Colonic mucosa (tissue), 4 donors: ENCODE measurements at regions of chr17 and their contacts with region 1.

Region 1: DNA sequence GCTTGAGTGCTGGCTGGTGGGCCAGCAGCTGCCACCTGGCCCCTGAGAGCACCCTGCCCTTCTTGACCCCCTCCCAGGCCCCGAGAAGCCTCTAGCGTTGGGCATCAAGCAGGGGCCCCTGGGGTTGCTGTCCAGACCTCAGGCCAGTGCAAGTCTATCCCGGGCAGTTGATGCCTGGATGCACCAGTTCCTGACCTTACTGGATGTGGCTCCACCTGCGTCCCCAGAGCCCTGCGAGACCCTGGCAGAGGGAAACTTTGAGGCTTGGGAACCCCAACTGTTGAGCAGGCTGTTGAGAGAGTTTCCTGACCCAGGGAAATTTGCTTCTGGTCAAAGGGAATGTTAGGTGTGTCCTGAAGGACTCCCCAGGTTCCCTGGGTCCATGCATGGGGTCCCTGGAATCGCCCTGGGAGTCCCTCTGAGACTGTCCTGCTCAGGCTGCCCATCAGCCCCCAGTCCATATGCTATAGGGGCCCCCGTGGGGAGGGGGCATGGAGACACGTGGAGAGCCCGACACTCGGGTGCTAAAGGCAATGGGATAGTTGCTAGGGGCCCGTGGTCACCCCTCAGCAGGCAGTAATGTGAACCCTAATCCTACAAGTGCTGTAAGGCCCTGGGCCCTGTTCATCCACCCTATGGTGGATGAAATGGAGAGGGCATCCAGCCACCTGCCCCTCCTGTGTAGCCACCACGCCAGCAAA is 46.4 kb downstream of the RAB11FIP4 start:
- DNase-seq: no peak
- H3K4me3 ChIP-seq: no peak overlapping the region
- H3K27ac ChIP-seq: no peak overlapping the region
- H3K4me1 ChIP-seq: no peaks in the 10 kb centered on the region
- H3K27me3 ChIP-seq: no peaks in the 10 kb centered on the region
- CTCF ChIP-seq: no peak

Region 2: DNA sequence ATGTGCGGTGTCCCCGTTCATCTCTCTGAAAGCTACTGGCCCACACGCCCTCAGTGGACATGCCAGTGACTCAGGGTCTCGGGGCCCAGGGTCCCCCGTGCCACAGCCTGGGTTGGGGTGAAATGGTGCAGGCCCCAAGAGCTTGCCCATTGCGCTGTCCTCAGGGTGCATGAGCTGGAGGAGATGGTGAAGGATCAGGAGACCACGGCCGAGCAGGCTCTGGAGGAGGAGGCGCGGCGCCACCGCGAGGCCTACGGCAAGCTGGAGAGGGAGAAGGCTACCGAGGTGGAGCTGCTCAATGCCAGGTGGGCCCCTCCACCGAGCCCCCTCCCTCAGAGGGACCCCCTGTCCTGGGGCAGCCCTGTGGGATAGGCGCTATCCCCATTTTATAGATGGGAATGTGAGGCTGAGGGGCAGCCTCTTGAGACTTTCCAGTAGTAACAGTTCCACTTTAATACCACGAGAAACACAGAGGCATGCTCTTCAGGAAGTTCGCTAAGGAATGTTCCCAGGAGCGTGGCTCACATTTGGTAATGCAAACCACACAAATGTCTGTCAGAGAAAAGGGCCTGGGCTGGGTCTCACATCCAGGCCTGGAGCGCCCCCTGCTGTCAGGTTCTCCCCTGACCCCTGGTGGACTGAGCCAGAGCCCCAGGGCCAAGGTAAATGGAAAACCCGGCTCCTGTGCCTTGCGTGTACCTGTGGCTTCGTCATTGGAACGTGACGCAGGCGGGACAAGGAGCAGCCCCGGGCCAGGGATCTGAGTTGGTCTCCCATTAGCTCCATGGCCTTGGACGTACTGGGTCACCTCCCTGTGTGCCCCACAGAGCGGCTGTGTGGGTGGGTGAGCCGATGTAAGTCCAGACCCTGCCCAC is 87.3 kb after region 1 on chr17:
- intact Hi-C with region 1: loop called (anchors 2 kb)
- DNase-seq: peak; percentile 87
- H3K4me3 ChIP-seq: no peak overlapping the region
- H3K27ac ChIP-seq: no peak overlapping the region
- H3K4me1 ChIP-seq: no peaks in the 10 kb centered on the region
- H3K27me3 ChIP-seq: no peaks in the 10 kb centered on the region
- CTCF ChIP-seq: peak; percentile 90

Region 3: GRCh38 chr17:31678431-31678830 is 240.6 kb after region 1 on chr17:
- intact Hi-C with region 1: no loop called
- DNase-seq: no peak
- H3K4me3 ChIP-seq: no peak overlapping the region
- H3K27ac ChIP-seq: no peak overlapping the region
- H3K4me1 ChIP-seq: no peaks in the 10 kb centered on the region
- H3K27me3 ChIP-seq: no peaks in the 10 kb centered on the region
- CTCF ChIP-seq: no peak

Region 4: DNA sequence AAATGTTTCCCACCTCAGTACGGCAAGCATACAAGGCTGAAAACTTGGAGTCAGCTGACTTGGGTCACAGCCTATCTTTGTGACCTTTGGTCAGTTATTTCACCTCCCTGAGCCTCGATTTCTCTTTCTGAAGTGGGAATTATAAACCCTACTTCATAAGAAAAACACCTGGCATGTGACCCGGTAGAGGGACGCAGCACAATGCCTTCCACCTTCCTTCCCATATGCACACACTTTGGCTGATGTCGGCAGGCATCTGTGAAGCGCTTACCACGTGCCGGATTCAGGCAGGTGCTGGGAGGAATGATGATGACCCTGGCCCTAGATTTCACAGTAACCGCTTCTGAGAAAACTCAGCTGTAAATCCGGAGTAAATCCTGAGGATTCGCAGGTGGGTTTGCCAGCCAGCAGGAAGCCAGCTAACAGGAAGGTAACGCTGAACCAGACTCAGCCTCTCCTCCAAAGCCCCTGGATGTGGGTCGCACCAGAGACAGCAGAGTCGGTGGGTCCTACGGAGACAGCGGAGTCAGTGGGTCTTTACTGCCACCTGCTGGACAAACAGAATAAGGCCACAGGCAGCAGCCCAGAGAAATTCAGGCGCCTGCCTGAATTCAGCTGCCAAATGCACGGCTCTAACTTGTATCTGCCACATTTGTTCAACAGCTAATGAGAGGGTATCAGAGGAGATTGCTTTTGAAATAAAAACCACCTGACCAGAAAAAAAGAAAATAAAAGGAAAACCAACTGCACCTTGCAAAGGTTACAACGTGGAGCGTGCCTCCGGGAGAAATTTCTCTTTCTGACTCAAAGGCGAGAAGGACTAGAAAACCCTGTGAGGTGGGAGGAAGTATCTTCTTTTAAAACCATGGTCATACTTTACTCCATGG is 404.6 kb after region 1 on chr17:
- intact Hi-C with region 1: loop called (anchors 5 kb)
- DNase-seq: peak; percentile 78
- H3K4me3 ChIP-seq: peak overlapping the region; percentile 16
- H3K27ac ChIP-seq: peak overlapping the region; percentile 15
- H3K4me1 ChIP-seq: no peaks in the 10 kb centered on the region
- H3K27me3 ChIP-seq: no peaks in the 10 kb centered on the region
- CTCF ChIP-seq: peak; percentile 98

Region 5: GRCh38 chr17:31907342-31907962 is 469.6 kb after region 1 on chr17:
- intact Hi-C with region 1: loop called (anchors 5 kb)
- DNase-seq: peak; percentile 32
- H3K4me3 ChIP-seq: no peak overlapping the region
- H3K27ac ChIP-seq: no peak overlapping the region
- H3K4me1 ChIP-seq: no peaks in the 10 kb centered on the region
- H3K27me3 ChIP-seq: no peaks in the 10 kb centered on the region
- CTCF ChIP-seq: no peak